Posterior vena cava (tissue), 2 donors: ENCODE measurements at regions of chr9 and their contacts with region 1.

Region 1: DNA sequence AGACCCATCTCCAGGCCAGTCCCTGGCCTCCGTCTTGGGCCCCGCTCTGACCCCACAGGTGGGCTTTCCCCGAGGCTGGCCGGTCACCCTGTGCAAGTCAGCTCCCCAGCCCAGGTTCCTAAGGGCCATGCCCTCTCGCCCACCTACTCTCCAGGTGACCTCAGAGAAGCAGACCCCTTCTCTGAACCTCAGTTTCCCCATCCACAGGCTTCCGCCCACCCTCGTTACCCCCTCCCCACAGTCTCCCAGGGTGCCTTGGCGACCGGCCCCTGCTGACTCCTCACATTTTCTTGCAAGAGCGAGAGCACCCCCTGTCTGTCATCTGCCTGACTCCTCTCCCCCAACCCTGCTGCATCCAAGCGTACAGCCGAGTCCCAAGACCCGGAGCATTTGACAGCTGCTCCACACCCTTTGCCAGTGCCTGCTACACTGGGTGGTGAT is 51.2 kb upstream of the ORM1 start:
- DNase-seq: peak; percentile 85

Region 2: GRCh38 chr9:113794721-113795120 is 476.9 kb before region 1 on chr9:
- intact Hi-C with region 1: loop called in 1 of 2 experiments (anchors 5 kb)
- DNase-seq: no peak